Activated T-helper 1 cell treated with anti-CD3 and anti-CD28 coated beads, Interleukin-12 subunit alpha, Interleukin-12 subunit beta, Interleukin-2, Interleukin-4 antibody, amounts not matched to agents 30 ng/mL and 10 ng/mL and 1 ng/mL, durations not matched to agents 14 hours and 24 hours and 36 hours (primary cell): ENCODE measurements at regions of chr16 and their contacts with region 1.

Region 1: GRCh38 chr16:87956365-87957231 is 5.4 kb downstream of the BANP start:
- DNase-seq: peak; percentile 72
- H3K4me3 Mint-ChIP-seq: peak overlapping the region; percentile 78
- H3K27ac Mint-ChIP-seq: peak overlapping the region; percentile 98
- H3K4me1 Mint-ChIP-seq: peaks cover 62% of the 10 kb centered on the region
- H3K27me3 Mint-ChIP-seq: no peaks in the 10 kb centered on the region

Region 2: GRCh38 chr16:87924422-87925298 is 31.9 kb before region 1 on chr16:
- intact Hi-C with region 1: no loop called
- DNase-seq: no peak
- H3K4me3 Mint-ChIP-seq: no peak overlapping the region
- H3K27ac Mint-ChIP-seq: no peak overlapping the region
- H3K4me1 Mint-ChIP-seq: peaks cover 6% of the 10 kb centered on the region
- H3K27me3 Mint-ChIP-seq: peaks cover 22% of the 10 kb centered on the region

Region 3: DNA sequence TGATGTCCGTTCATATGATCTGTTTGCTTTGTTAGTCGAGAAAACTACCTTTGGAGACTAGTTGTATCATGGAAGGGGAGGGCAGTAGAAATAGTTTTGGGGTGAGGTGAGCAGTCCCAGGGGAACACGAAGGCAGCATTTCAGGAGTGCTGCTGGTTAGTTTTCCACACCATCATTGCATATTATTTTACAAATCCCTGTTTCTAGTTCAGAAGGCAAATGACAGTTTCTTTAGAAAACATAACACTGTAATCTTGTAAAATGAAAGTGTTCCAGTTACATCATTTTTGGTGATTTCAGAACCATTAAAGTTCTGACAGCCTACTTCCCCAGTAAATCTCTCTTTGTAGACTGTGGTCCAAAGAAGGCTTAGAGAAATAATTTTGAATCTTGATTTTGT is 20.1 kb after region 1 on chr16:
- intact Hi-C with region 1: loop called (anchors 1 kb)
- DNase-seq: no peak
- H3K4me3 Mint-ChIP-seq: no peak overlapping the region
- H3K27ac Mint-ChIP-seq: no peak overlapping the region
- H3K4me1 Mint-ChIP-seq: peaks cover 41% of the 10 kb centered on the region
- H3K27me3 Mint-ChIP-seq: no peaks in the 10 kb centered on the region

Region 4: DNA sequence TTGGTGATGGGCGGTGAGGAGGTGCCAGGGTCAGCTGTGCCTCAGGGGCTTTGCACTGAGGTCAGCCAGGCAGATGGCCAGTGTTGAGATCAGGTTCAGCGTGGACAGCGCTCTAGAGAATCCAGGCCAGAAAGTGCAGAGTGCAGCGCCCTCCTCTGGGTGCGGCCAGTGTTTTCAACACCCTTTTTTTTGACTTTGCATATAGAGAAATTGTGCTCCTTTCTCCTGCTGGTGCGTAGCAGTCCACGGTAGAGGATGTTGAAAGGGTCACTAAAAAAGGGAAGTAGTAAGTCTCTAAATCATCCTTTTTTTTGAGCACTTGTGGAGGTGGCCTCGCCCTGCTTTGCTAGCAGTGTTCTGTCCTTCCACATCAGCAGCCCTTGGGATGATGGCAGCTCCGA is 48.6 kb after region 1 on chr16:
- intact Hi-C with region 1: loop called (anchors 2 kb)
- DNase-seq: no peak
- H3K4me3 Mint-ChIP-seq: no peak overlapping the region
- H3K27ac Mint-ChIP-seq: no peak overlapping the region
- H3K4me1 Mint-ChIP-seq: no peaks in the 10 kb centered on the region
- H3K27me3 Mint-ChIP-seq: no peaks in the 10 kb centered on the region

Region 5: DNA sequence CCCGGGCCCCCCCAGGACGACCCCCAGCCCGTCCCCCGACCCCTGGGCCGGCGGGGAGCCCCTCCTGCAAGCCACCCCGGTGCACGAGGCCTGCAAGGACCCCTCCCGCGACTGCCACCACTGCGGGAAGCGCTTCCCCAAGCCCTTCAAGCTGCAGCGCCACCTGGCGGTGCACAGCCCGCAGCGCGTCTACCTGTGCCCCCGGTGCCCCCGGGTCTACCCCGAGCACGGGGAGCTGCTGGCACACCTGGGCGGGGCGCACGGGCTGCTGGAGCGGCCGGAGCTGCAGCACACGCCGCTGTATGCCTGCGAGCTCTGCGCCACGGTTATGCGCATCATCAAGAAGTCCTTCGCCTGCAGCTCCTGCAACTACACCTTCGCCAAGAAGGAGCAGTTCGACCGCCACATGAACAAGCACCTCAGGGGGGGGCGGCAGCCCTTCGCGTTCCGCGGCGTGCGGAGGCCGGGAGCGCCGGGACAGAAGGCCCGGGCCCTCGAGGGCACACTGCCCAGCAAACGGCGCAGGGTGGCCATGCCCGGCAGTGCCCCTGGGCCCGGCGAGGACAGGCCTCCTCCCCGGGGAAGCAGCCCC is 480.9 kb after region 1 on chr16:
- intact Hi-C with region 1: loop called (anchors 1 kb)
- DNase-seq: peak; percentile 52
- H3K4me3 Mint-ChIP-seq: no peak overlapping the region
- H3K27ac Mint-ChIP-seq: no peak overlapping the region
- H3K4me1 Mint-ChIP-seq: no peaks in the 10 kb centered on the region
- H3K27me3 Mint-ChIP-seq: no peaks in the 10 kb centered on the region